MCF 10A (cell line): ENCODE measurements at regions of chr7 and their contacts with region 1.

Region 1: DNA sequence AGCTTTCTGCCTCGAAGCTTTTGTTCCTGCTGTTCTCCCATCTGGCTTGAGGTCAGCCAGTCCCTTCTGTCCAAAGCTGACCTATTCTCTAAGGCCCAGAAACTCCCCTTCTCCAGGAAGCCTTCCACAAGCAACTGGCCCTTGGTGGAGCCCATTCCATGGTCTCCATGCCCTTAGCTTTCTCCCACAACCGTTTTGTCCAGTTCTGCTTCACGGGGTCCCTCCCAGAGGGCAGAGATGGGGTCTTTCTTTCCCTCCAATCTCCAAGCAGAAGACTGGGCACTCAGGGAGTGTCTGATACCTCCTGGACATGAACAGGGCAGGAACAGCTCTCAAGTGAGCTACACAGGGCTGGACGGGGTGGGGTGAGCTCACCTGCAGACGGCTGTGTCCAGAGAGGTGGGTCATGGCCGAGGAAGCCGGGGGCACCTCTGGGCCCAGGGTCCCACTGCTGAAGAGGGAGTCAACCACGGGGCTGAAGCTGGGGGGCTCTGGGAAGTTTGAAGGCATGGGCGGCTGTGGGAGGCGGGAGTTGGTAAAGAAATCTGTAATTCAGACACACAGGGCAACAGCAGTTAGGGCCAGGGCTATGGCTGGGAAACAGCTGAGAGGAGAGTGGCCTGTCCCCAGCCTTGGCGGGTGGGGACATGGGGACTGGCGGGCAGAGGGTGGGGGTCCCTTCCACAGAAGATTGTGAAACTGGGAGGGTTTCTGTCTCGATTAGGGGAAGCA is 20.9 kb upstream of the TBL2 start:
- DNase-seq: no peak
- H3K4me3 Mint-ChIP-seq: no peak overlapping the region
- H3K27ac Mint-ChIP-seq: no peak overlapping the region
- H3K4me1 Mint-ChIP-seq: peaks cover 6% of the 10 kb centered on the region
- H3K27me3 Mint-ChIP-seq: peaks cover 24% of the 10 kb centered on the region
- CTCF ChIP-seq: no peak

Region 2: GRCh38 chr7:73537071-73537470 is 62.2 kb before region 1 on chr7:
- CTCF ChIA-PET with region 1: no interaction called
- POLR2A ChIA-PET with region 1: no interaction called
- intact Hi-C with region 1: no loop called
- DNase-seq: no peak
- H3K4me3 Mint-ChIP-seq: no peak overlapping the region
- H3K27ac Mint-ChIP-seq: no peak overlapping the region
- H3K4me1 Mint-ChIP-seq: no peaks in the 10 kb centered on the region
- H3K27me3 Mint-ChIP-seq: no peaks in the 10 kb centered on the region
- CTCF ChIP-seq: no peak

Region 3: DNA sequence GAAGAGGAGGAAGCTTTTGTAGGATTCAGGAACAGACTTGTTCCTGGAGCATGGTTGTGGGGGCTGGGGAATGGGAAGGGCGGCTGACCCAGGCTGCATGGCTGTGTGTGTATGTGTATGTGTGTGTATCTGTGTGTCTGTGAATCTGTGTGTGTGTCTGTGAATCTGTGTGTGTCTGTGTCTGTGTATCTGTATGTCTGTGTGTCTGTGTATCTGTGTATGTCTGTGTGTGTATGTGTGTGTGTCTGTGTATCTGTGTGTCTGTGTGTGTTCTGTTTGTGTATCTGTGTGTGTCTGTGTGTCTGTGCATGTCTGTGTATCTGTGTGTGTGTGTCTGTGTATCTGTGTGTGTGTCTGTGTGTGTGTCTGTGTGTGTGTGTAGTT is 126.8 kb after region 1 on chr7:
- CTCF ChIA-PET with region 1: interaction called, 11 read pairs
- POLR2A ChIA-PET with region 1: interaction called, 3 read pairs
- intact Hi-C with region 1: no loop called
- DNase-seq: no peak
- H3K4me3 Mint-ChIP-seq: no peak overlapping the region
- H3K27ac Mint-ChIP-seq: no peak overlapping the region
- H3K4me1 Mint-ChIP-seq: peaks cover 9% of the 10 kb centered on the region
- H3K27me3 Mint-ChIP-seq: no peaks in the 10 kb centered on the region
- CTCF ChIP-seq: no peak